ENCODE measurements at regions of chr14 and their contacts with region 1.

Region 1: DNA sequence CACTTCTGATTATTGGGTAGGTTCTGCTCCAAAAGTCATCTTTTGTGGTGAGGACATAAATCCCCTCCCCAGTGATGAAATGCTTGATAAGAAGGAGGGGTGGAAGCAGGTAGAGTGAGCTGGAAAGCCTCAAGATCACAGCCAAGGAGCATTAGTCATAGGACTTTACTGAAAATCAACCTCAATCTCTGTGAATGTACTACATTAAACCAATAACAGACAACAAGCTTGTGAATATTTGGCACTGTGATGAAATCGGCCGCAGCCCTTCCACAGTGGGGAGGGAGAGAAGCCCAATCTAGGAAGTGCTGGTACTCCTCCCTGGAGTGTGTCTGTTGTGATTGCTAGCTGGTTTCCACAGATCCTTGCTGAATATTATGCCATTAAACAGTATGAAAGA is 41.2 kb upstream of the PTCSC3 start:
- DNase-seq: peak; percentile 58
- H3K4me3 ChIP-seq: no peak overlapping the region
- H3K27ac ChIP-seq: no peak overlapping the region
- H3K4me1 ChIP-seq: peaks cover 17% of the 10 kb centered on the region
- H3K27me3 ChIP-seq: no peaks in the 10 kb centered on the region
- CTCF ChIP-seq: no peak

Region 2: GRCh38 chr14:36129181-36129580 is 88.6 kb before region 1 on chr14:
- CTCF ChIA-PET with region 1: no interaction called
- dilution Hi-C with region 1: no loop called
- in situ Hi-C with region 1: no loop called
- intact Hi-C with region 1: no loop called
- DNase-seq: peak; percentile 56
- H3K4me3 ChIP-seq: no peak overlapping the region
- H3K27ac ChIP-seq: no peak overlapping the region
- H3K4me1 ChIP-seq: no peaks in the 10 kb centered on the region
- H3K27me3 ChIP-seq: no peaks in the 10 kb centered on the region
- CTCF ChIP-seq: no peak

Region 3: DNA sequence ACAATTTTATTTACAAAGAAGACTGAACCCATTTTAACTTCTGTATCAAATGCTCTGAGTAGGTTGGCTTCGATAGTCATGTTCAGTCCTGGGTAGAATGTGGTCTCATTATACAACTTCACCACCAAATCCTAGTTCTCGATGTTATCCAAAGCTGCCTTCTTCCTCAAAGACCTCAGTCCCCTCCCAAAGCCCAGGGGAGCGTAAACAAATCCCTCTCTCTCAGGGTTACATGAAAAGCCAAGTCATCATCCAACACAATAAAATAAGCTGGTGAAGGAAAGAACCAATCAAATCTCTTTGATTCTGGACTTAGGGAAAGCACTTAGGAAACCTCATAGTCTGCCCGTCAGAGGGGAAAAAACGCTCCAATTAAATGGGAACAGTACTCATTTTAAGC is 50.3 kb before region 1 on chr14:
- CTCF ChIA-PET with region 1: no interaction called
- dilution Hi-C with region 1: no loop called
- in situ Hi-C with region 1: no loop called
- intact Hi-C with region 1: no loop called
- DNase-seq: no peak
- H3K4me3 ChIP-seq: no peak overlapping the region
- H3K27ac ChIP-seq: no peak overlapping the region
- H3K4me1 ChIP-seq: no peaks in the 10 kb centered on the region
- H3K27me3 ChIP-seq: peaks cover 7% of the 10 kb centered on the region
- CTCF ChIP-seq: no peak

Region 4: DNA sequence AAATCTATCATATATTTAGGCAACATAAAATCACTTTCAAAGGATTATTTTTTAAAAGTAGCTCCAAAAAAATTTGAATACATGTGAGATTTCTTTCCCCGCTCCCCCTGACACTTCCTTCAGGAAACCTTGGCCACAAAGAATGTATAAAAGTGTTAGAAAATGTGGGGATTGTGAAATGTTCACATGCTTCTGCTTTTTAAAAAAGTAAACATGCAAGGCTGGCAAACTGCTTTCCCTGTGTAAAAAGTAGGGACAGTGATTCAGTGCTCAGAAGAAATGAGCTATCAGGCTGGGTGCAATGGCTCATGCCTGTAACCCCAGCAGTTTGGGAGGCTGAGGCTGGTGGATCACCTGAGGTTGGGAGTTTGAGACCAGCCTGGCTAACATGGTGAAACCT is 76.1 kb after region 1 on chr14:
- CTCF ChIA-PET with region 1: no interaction called
- dilution Hi-C with region 1: loop called (anchors 5 kb)
- in situ Hi-C with region 1: no loop called
- intact Hi-C with region 1: no loop called
- DNase-seq: no peak
- H3K4me3 ChIP-seq: no peak overlapping the region
- H3K27ac ChIP-seq: no peak overlapping the region
- H3K4me1 ChIP-seq: no peaks in the 10 kb centered on the region
- H3K27me3 ChIP-seq: no peaks in the 10 kb centered on the region
- CTCF ChIP-seq: no peak

Region 5: GRCh38 chr14:36315159-36315853 is 97.6 kb after region 1 on chr14:
- CTCF ChIA-PET with region 1: no interaction called
- dilution Hi-C with region 1: no loop called
- in situ Hi-C with region 1: no loop called
- intact Hi-C with region 1: no loop called
- DNase-seq: peak; percentile 13
- H3K4me3 ChIP-seq: no peak overlapping the region
- H3K27ac ChIP-seq: no peak overlapping the region
- H3K4me1 ChIP-seq: peaks cover 7% of the 10 kb centered on the region
- H3K27me3 ChIP-seq: no peaks in the 10 kb centered on the region
- CTCF ChIP-seq: no peak

Measured in mammary epithelial cell (primary cell).